ENCODE measurements at regions of chr3 and their contacts with region 1.

Region 1: DNA sequence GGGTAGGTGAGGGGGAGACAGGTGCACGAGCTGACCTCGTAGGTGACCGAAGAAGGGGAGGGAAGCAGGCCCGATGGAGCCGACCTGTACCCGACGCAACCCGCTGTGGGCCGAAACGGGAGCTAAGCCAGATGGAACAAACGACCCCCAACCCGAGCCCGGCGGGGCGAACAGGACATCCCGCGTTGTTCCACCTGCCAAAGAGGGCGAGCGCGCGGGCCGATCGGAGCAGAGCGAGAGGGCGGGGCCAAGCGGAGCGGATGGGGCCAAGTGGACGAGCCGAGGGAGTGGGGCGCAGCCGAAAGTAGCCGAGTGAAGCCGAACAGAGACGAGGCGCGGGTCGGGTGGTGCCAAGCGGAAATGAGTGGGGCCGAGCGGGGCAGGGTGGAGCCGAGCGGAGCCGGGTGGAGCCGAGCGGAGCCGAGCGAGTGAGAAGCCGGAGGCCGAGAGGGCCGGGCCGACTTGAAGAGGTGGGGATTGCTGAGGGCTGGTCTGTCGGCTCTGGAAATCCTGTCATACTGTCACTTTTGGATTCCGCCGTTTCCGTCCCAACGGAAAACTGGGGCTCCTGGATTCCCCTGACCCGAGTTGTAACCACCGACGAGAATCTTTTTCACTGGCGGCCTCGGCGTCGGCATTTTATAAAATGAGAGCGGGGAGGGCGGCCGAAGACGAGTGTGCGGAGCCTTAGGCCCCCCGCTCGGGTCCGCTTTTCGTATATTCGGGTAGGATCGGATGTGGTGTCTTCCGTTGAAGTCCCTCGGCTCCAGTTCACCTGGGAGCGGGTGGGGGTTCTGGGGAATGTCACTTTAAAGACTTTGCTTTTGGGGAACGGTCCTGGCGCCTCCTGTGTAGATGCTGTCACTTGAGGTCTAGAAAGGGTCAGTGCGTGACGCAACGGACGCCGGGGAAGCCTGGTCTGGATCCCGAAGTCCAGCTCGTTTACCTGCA is 15.6 kb upstream of the WNT7A start:
- DNase-seq: peak; percentile 85 to 95 (median 93)
- ATAC-seq: peak; percentile 97
- H3K4me3 ChIP-seq: peak overlapping the region; percentile 84
- H3K4me3 Mint-ChIP-seq: peak overlapping the region; percentile 67 to 94 (median 90)
- H3K27ac ChIP-seq: peak overlapping the region; percentile 94
- H3K27ac Mint-ChIP-seq: peak overlapping the region; percentile 79 to 95 (median 88)
- H3K4me1 ChIP-seq: peaks cover 26 to 31% of the 10 kb centered on the region in 2 donors
- H3K4me1 Mint-ChIP-seq: peaks cover 5 to 47% (median 29%) of the 10 kb centered on the region in 7 donors
- H3K27me3 ChIP-seq: no peaks in the 10 kb centered on the region
- H3K27me3 Mint-ChIP-seq: peaks cover 0 to 9% (median 0%) of the 10 kb centered on the region in 5 donors

Region 2: GRCh38 chr3:13012228-13012691 is 883.2 kb before region 1 on chr3:
- CTCF ChIA-PET with region 1: no interaction called
- POLR2A ChIA-PET with region 1: no interaction called
- intact Hi-C with region 1: loop called in 1 of 2 experiments (anchors 10 kb)
- DNase-seq: peak in 2 of 9 donors; percentile 24 to 52
- ATAC-seq: peak; percentile 60
- H3K4me3 ChIP-seq: peak overlapping the region; percentile 38
- H3K4me3 Mint-ChIP-seq: peak overlapping the region; percentile 69 to 96 (median 84)
- H3K27ac ChIP-seq: peak overlapping the region; percentile 99
- H3K27ac Mint-ChIP-seq: peak overlapping the region; percentile 96 to 100 (median 98)
- H3K4me1 ChIP-seq: peaks cover 84 to 90% of the 10 kb centered on the region in 2 donors
- H3K4me1 Mint-ChIP-seq: peaks cover 72 to 92% (median 77%) of the 10 kb centered on the region in 7 donors
- H3K27me3 ChIP-seq: no peaks in the 10 kb centered on the region
- H3K27me3 Mint-ChIP-seq: no peaks in the 10 kb centered on the region

Region 3: GRCh38 chr3:13215940-13216546 is 679.4 kb before region 1 on chr3:
- CTCF ChIA-PET with region 1: no interaction called
- POLR2A ChIA-PET with region 1: no interaction called
- intact Hi-C with region 1: no loop called
- DNase-seq: no peak
- ATAC-seq: no peak
- H3K4me3 ChIP-seq: no peak overlapping the region
- H3K4me3 Mint-ChIP-seq: no peak overlapping the region
- H3K27ac ChIP-seq: no peak overlapping the region
- H3K27ac Mint-ChIP-seq: peak overlapping the region in 1 of 9 donors; percentile 28
- H3K4me1 ChIP-seq: no peaks in the 10 kb centered on the region
- H3K4me1 Mint-ChIP-seq: no peaks in the 10 kb centered on the region
- H3K27me3 ChIP-seq: no peaks in the 10 kb centered on the region
- H3K27me3 Mint-ChIP-seq: peaks cover 0 to 3% (median 0%) of the 10 kb centered on the region in 5 donors

Region 4: GRCh38 chr3:13884851-13885703 is 10.4 kb before region 1 on chr3:
- CTCF ChIA-PET with region 1: interaction called, 35 read pairs
- POLR2A ChIA-PET with region 1: interaction called, 37 read pairs
- intact Hi-C with region 1: loop called in 1 of 2 experiments (anchors 1 kb)
- DNase-seq: peak; percentile 42 to 83 (median 74)
- ATAC-seq: peak; percentile 84
- H3K4me3 ChIP-seq: no peak overlapping the region
- H3K4me3 Mint-ChIP-seq: peak overlapping the region in 1 of 10 donors; percentile 71
- H3K27ac ChIP-seq: no peak overlapping the region
- H3K27ac Mint-ChIP-seq: peak overlapping the region in 4 of 9 donors; percentile 9 to 86 (median 40)
- H3K4me1 ChIP-seq: peaks cover 9 to 10% of the 10 kb centered on the region in 2 donors
- H3K4me1 Mint-ChIP-seq: peaks cover 2 to 23% (median 17%) of the 10 kb centered on the region in 7 donors
- H3K27me3 ChIP-seq: peaks cover 0 to 6% of the 10 kb centered on the region in 2 donors
- H3K27me3 Mint-ChIP-seq: peaks cover 0 to 42% (median 21%) of the 10 kb centered on the region in 5 donors

Region 5: GRCh38 chr3:14178247-14179113 is 283.1 kb after region 1 on chr3 and contains the starts of genes LSM3 and XPC:
- CTCF ChIA-PET with region 1: interaction called, 3 read pairs
- POLR2A ChIA-PET with region 1: interaction called, 12 read pairs
- intact Hi-C with region 1: loop called (anchors 1 kb)
- DNase-seq: peak; percentile 98 to 100 (median 99)
- ATAC-seq: peak; percentile 98
- H3K4me3 ChIP-seq: peak within 1 kb of the TSS; percentile 68
- H3K4me3 Mint-ChIP-seq: peak within 1 kb of the TSS; percentile 94 to 100 (median 98)
- H3K27ac ChIP-seq: peak within 1 kb of the TSS; percentile 99
- H3K27ac Mint-ChIP-seq: peak within 1 kb of the TSS; percentile 96 to 100 (median 99)
- H3K4me1 ChIP-seq: peaks cover 37 to 48% of the 10 kb centered on the region in 2 donors
- H3K4me1 Mint-ChIP-seq: peaks cover 45 to 85% (median 82%) of the 10 kb centered on the region in 7 donors
- H3K27me3 ChIP-seq: no peaks in the 10 kb centered on the region
- H3K27me3 Mint-ChIP-seq: peaks cover 0 to 2% (median 0%) of the 10 kb centered on the region in 5 donors
- total RNA-seq, gene LSM3: 6.0 to 14.1 (median 8.0) TPM
- total RNA-seq, gene XPC: 56.3 to 94.8 (median 78.1) TPM

Region 6: DNA sequence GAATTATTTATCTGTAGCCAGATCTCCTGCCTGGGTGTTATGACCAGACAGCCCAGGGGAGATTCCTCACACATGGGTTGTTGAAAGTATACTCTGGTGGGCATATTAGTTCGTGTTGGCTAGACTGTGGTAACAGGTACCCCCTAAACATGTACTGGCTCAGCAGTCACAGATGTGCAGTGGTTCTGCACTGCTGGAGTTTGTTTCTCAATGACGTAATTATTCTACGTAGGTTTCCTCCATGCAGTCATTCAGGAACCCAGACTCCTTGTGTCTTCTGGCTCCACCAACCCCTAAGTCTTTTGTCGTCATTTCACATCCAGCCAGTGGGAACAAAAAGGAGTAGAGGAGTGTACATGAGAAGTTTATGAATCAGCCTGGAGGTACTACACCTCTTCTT is 299.4 kb after region 1 on chr3:
- CTCF ChIA-PET with region 1: no interaction called
- POLR2A ChIA-PET with region 1: no interaction called
- intact Hi-C with region 1: no loop called
- DNase-seq: no peak
- ATAC-seq: no peak
- H3K4me3 ChIP-seq: no peak overlapping the region
- H3K4me3 Mint-ChIP-seq: no peak overlapping the region
- H3K27ac ChIP-seq: no peak overlapping the region
- H3K27ac Mint-ChIP-seq: peak overlapping the region in 1 of 9 donors; percentile 51
- H3K4me1 ChIP-seq: no peaks in the 10 kb centered on the region
- H3K4me1 Mint-ChIP-seq: peaks cover 28 to 42% (median 39%) of the 10 kb centered on the region in 7 donors
- H3K27me3 ChIP-seq: no peaks in the 10 kb centered on the region
- H3K27me3 Mint-ChIP-seq: no peaks in the 10 kb centered on the region

Region 7: GRCh38 chr3:14431892-14432834 is 536.7 kb after region 1 on chr3:
- CTCF ChIA-PET with region 1: interaction called, 3 read pairs
- POLR2A ChIA-PET with region 1: interaction called, 3 read pairs
- intact Hi-C with region 1: loop called (anchors 1 to 10 kb)
- DNase-seq: peak; percentile 73 to 94 (median 91)
- ATAC-seq: peak; percentile 89
- H3K4me3 ChIP-seq: peak overlapping the region; percentile 53
- H3K4me3 Mint-ChIP-seq: peak overlapping the region; percentile 51 to 90 (median 78)
- H3K27ac ChIP-seq: peak overlapping the region; percentile 84
- H3K27ac Mint-ChIP-seq: peak overlapping the region; percentile 87 to 100 (median 98)
- H3K4me1 ChIP-seq: peaks cover 55 to 81% of the 10 kb centered on the region in 2 donors
- H3K4me1 Mint-ChIP-seq: peaks cover 57 to 85% (median 75%) of the 10 kb centered on the region in 7 donors
- H3K27me3 ChIP-seq: no peaks in the 10 kb centered on the region
- H3K27me3 Mint-ChIP-seq: no peaks in the 10 kb centered on the region

Region 8: GRCh38 chr3:14651440-14652251 is 756.2 kb after region 1 on chr3 and contains the start of gene CCDC174:
- CTCF ChIA-PET with region 1: interaction called, 3 read pairs
- POLR2A ChIA-PET with region 1: interaction called, 7 read pairs
- intact Hi-C with region 1: loop called (anchors 1 to 2 kb)
- DNase-seq: peak; percentile 84 to 98 (median 96)
- ATAC-seq: peak; percentile 99
- H3K4me3 ChIP-seq: peak within 1 kb of the TSS; percentile 90
- H3K4me3 Mint-ChIP-seq: peak within 1 kb of the TSS; percentile 84 to 100 (median 96)
- H3K27ac ChIP-seq: peak within 1 kb of the TSS; percentile 94
- H3K27ac Mint-ChIP-seq: peak within 1 kb of the TSS; percentile 92 to 100 (median 98)
- H3K4me1 ChIP-seq: peaks cover 21 to 25% of the 10 kb centered on the region in 2 donors
- H3K4me1 Mint-ChIP-seq: peaks cover 25 to 80% (median 66%) of the 10 kb centered on the region in 7 donors
- H3K27me3 ChIP-seq: no peaks in the 10 kb centered on the region
- H3K27me3 Mint-ChIP-seq: peaks cover 0 to 2% (median 0%) of the 10 kb centered on the region in 5 donors
- total RNA-seq, gene CCDC174: 21.6 to 59.2 (median 46.2) TPM

Region 9: GRCh38 chr3:14890476-14890875 is 995.0 kb after region 1 on chr3:
- CTCF ChIA-PET with region 1: no interaction called
- POLR2A ChIA-PET with region 1: no interaction called
- intact Hi-C with region 1: no loop called
- DNase-seq: no peak
- ATAC-seq: no peak
- H3K4me3 ChIP-seq: no peak overlapping the region
- H3K4me3 Mint-ChIP-seq: no peak overlapping the region
- H3K27ac ChIP-seq: no peak overlapping the region
- H3K27ac Mint-ChIP-seq: peak overlapping the region in 1 of 9 donors; percentile 52
- H3K4me1 ChIP-seq: peaks cover 0 to 6% of the 10 kb centered on the region in 2 donors
- H3K4me1 Mint-ChIP-seq: peaks cover 11 to 19% (median 14%) of the 10 kb centered on the region in 7 donors
- H3K27me3 ChIP-seq: no peaks in the 10 kb centered on the region
- H3K27me3 Mint-ChIP-seq: peaks cover 0 to 25% (median 0%) of the 10 kb centered on the region in 5 donors